ENCODE measurements at regions of chr16 and their contacts with region 1.

Region 1: GRCh38 chr16:72876221-72876620 is 171.7 kb downstream of the ZFHX3 start:
- DNase-seq: peak; percentile 94
- ATAC-seq: peak; percentile 45
- H3K4me3 ChIP-seq: no peak overlapping the region
- H3K27ac ChIP-seq: peak overlapping the region; percentile 21
- H3K4me1 ChIP-seq: peaks cover 26% of the 10 kb centered on the region
- H3K27me3 ChIP-seq: no peaks in the 10 kb centered on the region
- CTCF ChIP-seq: no peak
- POLR2A ChIP-seq: peak; percentile 34; the same call in 1 of the 2 replicates
- RAD21 ChIP-seq: no peak

Region 2: GRCh38 chr16:72847187-72848027 is 28.8 kb before region 1 on chr16:
- CTCF ChIA-PET with region 1: interaction called, 3 read pairs
- POLR2A ChIA-PET with region 1: no interaction called
- dilution Hi-C with region 1: no loop called
- in situ Hi-C with region 1: no loop called
- intact Hi-C with region 1: loop called (anchors 2 kb)
- DNase-seq: peak; percentile 36
- ATAC-seq: peak; percentile 50; the same call in 1 of the 2 replicates
- H3K4me3 ChIP-seq: no peak overlapping the region
- H3K27ac ChIP-seq: no peak overlapping the region
- H3K4me1 ChIP-seq: peaks cover 27% of the 10 kb centered on the region
- H3K27me3 ChIP-seq: no peaks in the 10 kb centered on the region
- CTCF ChIP-seq: peak; percentile 38
- POLR2A ChIP-seq: no peak
- RAD21 ChIP-seq: peak; percentile 53

Region 3: DNA sequence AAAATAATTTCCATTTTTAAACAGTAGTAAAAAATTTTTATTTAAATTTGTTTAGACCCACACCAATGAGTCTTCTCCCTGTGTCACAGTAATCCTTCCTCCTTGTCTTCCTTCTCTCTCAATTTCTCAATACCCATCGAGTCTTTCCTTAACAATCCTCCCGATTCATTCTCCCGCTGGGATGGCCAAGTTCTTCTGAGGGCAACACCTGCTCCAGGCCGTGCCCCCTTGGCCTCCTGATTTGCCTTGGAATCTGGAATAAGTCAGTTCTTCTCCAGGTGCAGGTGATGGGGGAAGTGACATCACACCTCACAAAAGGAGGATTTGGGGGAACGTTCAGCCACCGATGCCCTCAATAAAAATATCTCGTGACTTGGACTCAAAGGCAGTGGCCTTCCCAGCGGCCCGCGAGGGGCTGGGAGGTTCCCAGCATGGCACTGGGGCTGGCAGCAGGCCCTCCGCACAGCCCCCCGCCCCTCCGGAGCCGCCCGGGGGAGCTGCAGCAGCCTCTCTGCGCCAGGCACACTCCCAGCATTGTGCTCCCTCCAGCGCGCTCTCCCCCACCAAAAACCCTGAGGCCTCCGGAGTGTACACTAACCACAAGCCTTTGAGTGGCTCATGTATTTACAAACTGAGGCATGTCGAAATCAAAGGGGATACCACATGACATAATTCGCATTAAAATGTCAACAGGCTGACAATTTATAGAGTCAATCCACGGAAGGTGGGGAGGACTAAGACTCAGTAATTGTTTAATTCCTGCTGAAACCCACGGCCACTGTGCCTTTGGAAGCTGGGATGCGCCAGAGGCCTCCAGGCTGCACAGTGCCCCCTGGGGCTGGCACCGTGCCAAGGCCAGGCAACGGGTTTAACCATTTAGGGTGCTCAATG is 51.2 kb after region 1 on chr16:
- CTCF ChIA-PET with region 1: no interaction called
- POLR2A ChIA-PET with region 1: no interaction called
- dilution Hi-C with region 1: no loop called
- in situ Hi-C with region 1: no loop called
- intact Hi-C with region 1: loop called (anchors 2 kb)
- DNase-seq: peak; percentile 97
- ATAC-seq: peak; percentile 87
- H3K4me3 ChIP-seq: no peak overlapping the region
- H3K27ac ChIP-seq: no peak overlapping the region
- H3K4me1 ChIP-seq: peaks cover 14% of the 10 kb centered on the region
- H3K27me3 ChIP-seq: peaks cover 4% of the 10 kb centered on the region; the same call in 1 of the 2 replicates
- CTCF ChIP-seq: no peak; the same call in 1 of the 2 replicates
- POLR2A ChIP-seq: no peak
- RAD21 ChIP-seq: peak; percentile 28; the same call in 1 of the 2 replicates

Region 4: DNA sequence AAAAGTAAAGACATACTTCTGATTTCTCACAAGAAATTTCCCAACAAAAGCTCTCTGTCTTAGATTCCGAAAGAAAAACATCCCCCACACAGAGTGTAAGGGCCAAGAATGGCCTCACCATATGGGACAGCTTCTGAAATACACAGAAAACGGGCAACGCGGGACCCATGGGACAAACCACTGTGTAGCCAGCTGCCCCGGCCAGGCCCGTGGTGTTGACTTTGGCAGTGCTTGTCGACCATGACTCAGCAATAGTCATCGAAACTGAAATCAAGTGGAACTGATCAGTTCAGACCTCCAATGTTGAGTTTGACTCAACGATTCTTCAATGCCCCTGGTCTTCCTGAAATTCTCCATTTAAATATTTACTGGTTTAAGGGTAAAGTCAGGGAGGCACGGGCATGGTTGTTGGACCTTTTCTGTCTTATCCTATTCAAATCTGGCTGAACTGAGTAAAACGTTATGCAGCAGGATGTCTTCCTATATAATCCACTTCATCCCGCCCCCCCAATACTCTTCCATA is 144.2 kb after region 1 on chr16:
- CTCF ChIA-PET with region 1: no interaction called
- POLR2A ChIA-PET with region 1: no interaction called
- dilution Hi-C with region 1: no loop called
- in situ Hi-C with region 1: no loop called
- intact Hi-C with region 1: no loop called
- DNase-seq: peak; percentile 92
- ATAC-seq: peak; percentile 76
- H3K4me3 ChIP-seq: no peak overlapping the region
- H3K27ac ChIP-seq: peak overlapping the region; percentile 6; the same call in 1 of the 2 replicates
- H3K4me1 ChIP-seq: peaks cover 24% of the 10 kb centered on the region
- H3K27me3 ChIP-seq: no peaks in the 10 kb centered on the region
- CTCF ChIP-seq: no peak
- POLR2A ChIP-seq: no peak
- RAD21 ChIP-seq: no peak

Region 5: GRCh38 chr16:73172241-73172972 is 296.2 kb after region 1 on chr16:
- CTCF ChIA-PET with region 1: no interaction called
- POLR2A ChIA-PET with region 1: no interaction called
- dilution Hi-C with region 1: no loop called
- in situ Hi-C with region 1: no loop called
- intact Hi-C with region 1: loop called (anchors 5 kb)
- DNase-seq: peak; percentile 91
- ATAC-seq: peak; percentile 78
- H3K4me3 ChIP-seq: no peak overlapping the region
- H3K27ac ChIP-seq: peak overlapping the region; percentile 68; the same call in 1 of the 2 replicates
- H3K4me1 ChIP-seq: peaks cover 16% of the 10 kb centered on the region
- H3K27me3 ChIP-seq: 0 out of 2 replicates have a peak, but pooled peaks cover 3% of the 10 kb centered on the region
- CTCF ChIP-seq: peak; percentile 36
- POLR2A ChIP-seq: no peak
- RAD21 ChIP-seq: peak; percentile 36

Region 6: DNA sequence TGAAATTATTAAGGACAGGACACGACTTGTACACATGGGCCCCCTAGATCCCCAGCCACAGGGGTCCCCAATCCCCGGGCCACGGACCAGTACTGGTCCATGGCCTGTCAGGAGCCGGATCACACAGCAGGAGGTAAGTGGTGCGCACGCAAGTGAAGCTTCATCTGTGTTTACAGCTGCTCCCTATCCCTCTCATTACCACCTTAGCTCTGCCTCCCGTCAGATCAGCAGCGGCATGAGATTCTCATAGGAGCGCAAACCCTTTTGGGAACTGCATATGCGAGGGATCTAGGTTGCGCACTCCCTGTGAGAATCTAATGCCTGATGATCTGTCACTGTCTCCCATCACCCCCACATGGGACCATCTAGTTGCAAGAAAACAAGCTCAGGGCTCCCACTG is 309.5 kb after region 1 on chr16:
- CTCF ChIA-PET with region 1: no interaction called
- POLR2A ChIA-PET with region 1: no interaction called
- dilution Hi-C with region 1: no loop called
- in situ Hi-C with region 1: no loop called
- intact Hi-C with region 1: no loop called
- DNase-seq: no peak
- ATAC-seq: no peak
- H3K4me3 ChIP-seq: no peak overlapping the region
- H3K27ac ChIP-seq: no peak overlapping the region
- H3K4me1 ChIP-seq: no peaks in the 10 kb centered on the region
- H3K27me3 ChIP-seq: peaks cover 8% of the 10 kb centered on the region
- CTCF ChIP-seq: no peak
- POLR2A ChIP-seq: no peak
- RAD21 ChIP-seq: no peak

Measured in IMR-90 (cell line).